Endothelial cell of umbilical vein (primary cell): ENCODE measurements at regions of chr9 and their contacts with region 1.

Region 1: GRCh38 chr9:84668196-84669012 is 1.1 kb upstream of the NTRK2 start:
- DNase-seq: peak; percentile 52
- H3K4me3 ChIP-seq: peak overlapping the region in 2 of 3 experiments; percentile 29 to 40
- H3K27ac ChIP-seq: no peak overlapping the region
- H3K4me1 ChIP-seq: peaks cover 15% of the 10 kb centered on the region
- H3K27me3 ChIP-seq: peaks cover 32 to 62% of the 10 kb centered on the region in 2 experiments
- CTCF ChIP-seq: peak; percentile 59 to 60
- POLR2A ChIP-seq: no peak

Region 2: GRCh38 chr9:84781458-84781857 is 113.1 kb after region 1 on chr9:
- CTCF ChIA-PET with region 1: interaction called, 4 read pairs
- POLR2A ChIA-PET with region 1: no interaction called
- dilution Hi-C with region 1: no loop called
- intact Hi-C with region 1: loop called (anchors 2 kb)
- DNase-seq: peak; percentile 33
- H3K4me3 ChIP-seq: no peak overlapping the region
- H3K27ac ChIP-seq: no peak overlapping the region
- H3K4me1 ChIP-seq: peaks cover 7% of the 10 kb centered on the region
- H3K27me3 ChIP-seq: no peaks in the 10 kb centered on the region
- CTCF ChIP-seq: peak; percentile 30
- POLR2A ChIP-seq: no peak